GM12878 (cell line): ENCODE measurements at regions of chr3 and their contacts with region 1.

Region 1: DNA sequence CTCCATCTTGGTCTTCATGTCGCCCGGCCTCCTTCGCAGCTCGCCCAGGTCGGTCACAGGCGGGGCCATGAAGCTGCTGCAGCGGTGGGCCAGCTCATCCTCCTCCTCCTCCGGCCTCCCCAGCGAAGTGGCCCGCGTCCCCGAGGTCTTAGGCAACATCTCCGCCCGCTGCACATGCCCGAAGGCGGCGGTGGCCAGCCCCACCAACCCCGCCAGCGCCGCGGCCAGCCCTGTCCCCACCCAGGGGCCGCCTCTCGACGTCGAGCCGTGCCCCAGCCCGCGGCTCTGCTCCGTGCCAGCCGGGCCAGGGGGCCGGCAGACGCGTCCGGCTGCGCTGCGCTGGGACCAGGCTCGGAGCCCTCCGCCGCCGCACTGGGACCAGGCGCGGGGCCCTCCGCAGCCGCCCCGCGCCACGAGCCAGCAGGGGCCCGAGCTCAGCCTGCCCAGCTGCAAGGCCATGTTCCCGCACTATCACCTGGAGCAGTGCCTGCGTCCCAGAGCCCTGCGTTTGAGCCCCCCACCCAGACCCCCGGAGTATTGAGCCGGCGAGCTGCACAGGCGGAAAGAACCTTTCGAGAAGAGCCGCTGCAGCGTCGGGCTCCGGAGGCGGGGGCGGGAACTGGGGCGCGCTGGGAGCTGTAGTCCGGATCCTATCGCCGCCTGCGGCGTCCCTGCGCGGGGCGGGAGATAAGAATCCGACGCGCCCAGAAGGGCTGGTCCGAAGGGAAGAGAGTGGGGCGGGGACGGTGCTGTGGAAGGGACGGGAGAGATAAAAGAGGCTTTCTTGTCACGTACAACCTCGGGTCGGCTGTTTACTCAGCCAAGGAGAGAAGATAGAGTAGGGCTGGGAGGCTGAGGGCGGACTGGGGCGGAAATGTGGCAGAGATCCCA is at the start of gene CPOX:
- DNase-seq: peak; percentile 76
- ATAC-seq: peak; percentile 96
- H3K4me3 ChIP-seq: peak within 1 kb of the TSS; percentile 81
- H3K27ac ChIP-seq: peak within 1 kb of the TSS; percentile 84
- H3K4me1 ChIP-seq: peaks cover 7% of the 10 kb centered on the region
- H3K27me3 ChIP-seq: no peaks in the 10 kb centered on the region
- CTCF ChIP-seq: no peak
- EP300 ChIP-seq: no peak
- POLR2A ChIP-seq: peak; percentile 76
- RAD21 ChIP-seq: 0 out of 2 replicates have a peak, but pooled peaks have one; percentile 1
- polyA plus RNA-seq, gene CPOX: 40.7 to 45.8 TPM

Region 2: DNA sequence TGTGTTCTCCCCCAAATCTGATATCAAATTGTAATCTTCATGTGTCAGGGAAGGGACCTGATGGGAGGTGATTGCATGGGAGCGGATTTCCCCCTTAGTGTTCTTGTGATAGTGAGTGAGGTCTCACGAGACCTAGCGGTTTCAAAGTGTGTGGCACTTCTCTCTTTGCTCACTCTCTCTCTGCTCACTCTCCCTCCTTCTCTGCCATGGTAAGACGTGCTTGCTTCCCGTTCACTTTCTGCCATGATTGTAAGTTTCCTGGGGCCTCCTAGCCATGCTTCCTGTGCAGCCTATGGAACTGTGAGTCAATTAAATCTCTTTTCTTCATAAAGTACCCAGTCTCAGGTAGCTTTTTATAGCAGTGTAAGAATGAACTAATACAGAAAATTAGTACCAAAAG is 359.8 kb before region 1 on chr3:
- CTCF ChIA-PET with region 1: no interaction called
- POLR2A ChIA-PET with region 1: no interaction called
- RAD21 ChIA-PET with region 1: no interaction called
- SMC1A ChIA-PET with region 1: interaction called, 4 read pairs
- in situ Hi-C with region 1: no loop called
- intact Hi-C with region 1: loop called (anchors 10 kb)
- DNase-seq: peak; percentile 72
- ATAC-seq: peak; percentile 86
- H3K4me3 ChIP-seq: no peak overlapping the region
- H3K27ac ChIP-seq: no peak overlapping the region
- H3K4me1 ChIP-seq: no peaks in the 10 kb centered on the region
- H3K27me3 ChIP-seq: no peaks in the 10 kb centered on the region
- CTCF ChIP-seq: no peak
- EP300 ChIP-seq: no peak
- POLR2A ChIP-seq: no peak
- RAD21 ChIP-seq: no peak

Region 3: DNA sequence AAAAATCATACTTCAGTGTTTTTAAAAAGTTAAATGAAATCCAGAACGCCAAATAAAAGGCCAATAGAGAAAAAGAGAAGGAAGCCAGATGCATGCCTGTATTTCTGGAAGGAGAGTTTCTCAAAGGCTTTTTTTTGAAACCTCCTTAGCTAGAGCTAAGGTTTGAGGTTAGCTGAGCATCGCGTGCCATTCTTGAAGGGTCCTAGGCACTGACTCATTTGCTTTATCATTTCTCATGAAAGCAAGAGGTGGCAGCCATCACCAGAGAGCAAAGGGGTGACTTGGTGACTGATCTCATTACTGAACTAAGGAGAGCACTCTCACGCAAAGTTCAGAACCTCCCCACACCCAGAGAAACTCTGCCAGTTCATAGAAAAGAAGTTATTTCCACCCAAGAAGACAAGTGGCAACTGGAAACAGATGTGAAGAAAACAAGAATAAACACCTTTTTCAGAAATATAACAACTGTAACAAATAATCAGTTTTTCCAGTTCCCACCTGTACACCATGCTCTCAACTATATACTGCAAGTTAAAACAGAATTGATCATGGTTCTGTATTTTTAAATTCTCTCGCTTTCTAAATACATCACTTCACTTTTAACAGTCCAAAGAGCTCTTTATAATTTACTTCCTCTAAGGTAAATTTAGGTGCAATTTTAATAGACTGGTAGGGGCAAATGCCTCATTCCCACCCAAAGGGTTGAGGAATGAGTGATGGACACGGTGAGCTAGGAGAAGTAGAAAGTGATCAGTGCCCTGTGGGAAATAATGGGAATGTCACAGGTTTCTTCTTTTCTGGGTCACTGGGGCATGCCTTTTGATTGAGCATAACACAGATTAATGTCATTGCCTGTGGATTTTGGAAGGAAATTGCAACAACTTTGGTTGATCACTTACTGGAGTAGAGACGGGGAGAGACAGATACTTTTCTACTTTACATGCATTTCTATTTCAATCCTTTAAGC is 36.8 kb before region 1 on chr3:
- CTCF ChIA-PET with region 1: interaction called, 5 read pairs
- POLR2A ChIA-PET with region 1: interaction called, 4 read pairs
- RAD21 ChIA-PET with region 1: interaction called, 4 read pairs
- SMC1A ChIA-PET with region 1: interaction called, 13 read pairs
- in situ Hi-C with region 1: no loop called
- intact Hi-C with region 1: loop called (anchors 2 kb)
- DNase-seq: peak; percentile 99
- ATAC-seq: peak; percentile 55
- H3K4me3 ChIP-seq: peak overlapping the region; percentile 58
- H3K27ac ChIP-seq: peak overlapping the region; percentile 100
- H3K4me1 ChIP-seq: peaks cover 20% of the 10 kb centered on the region
- H3K27me3 ChIP-seq: no peaks in the 10 kb centered on the region
- CTCF ChIP-seq: no peak
- EP300 ChIP-seq: peak; percentile 100
- POLR2A ChIP-seq: peak; percentile 49; the same call in 1 of the 2 replicates
- RAD21 ChIP-seq: peak; percentile 35; the same call in 1 of the 2 replicates

Region 4: DNA sequence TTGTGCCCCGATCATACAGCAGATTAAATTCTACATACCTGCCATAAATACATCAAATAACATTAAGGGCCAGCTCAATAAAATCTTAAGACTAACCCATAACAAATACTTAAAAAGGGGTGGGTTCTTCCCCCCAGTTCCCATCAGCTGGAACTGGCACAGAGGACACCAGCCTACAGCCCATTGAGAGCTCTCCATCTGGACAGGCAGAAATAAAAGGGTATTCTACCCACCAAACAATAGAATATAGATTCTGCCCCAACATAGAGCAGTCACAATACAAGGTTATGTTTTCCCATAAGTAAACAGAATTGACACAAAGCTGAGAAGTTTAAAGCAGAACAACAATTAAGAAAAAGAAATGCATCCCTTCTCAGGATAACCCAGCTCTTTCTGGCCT is 11.8 kb before region 1 on chr3:
- CTCF ChIA-PET with region 1: interaction called, 14 read pairs
- POLR2A ChIA-PET with region 1: interaction called, 3 read pairs
- RAD21 ChIA-PET with region 1: interaction called, 5 read pairs
- SMC1A ChIA-PET with region 1: interaction called, 8 read pairs
- in situ Hi-C with region 1: no loop called
- intact Hi-C with region 1: no loop called
- DNase-seq: no peak
- ATAC-seq: no peak
- H3K4me3 ChIP-seq: no peak overlapping the region
- H3K27ac ChIP-seq: no peak overlapping the region
- H3K4me1 ChIP-seq: no peaks in the 10 kb centered on the region
- H3K27me3 ChIP-seq: no peaks in the 10 kb centered on the region
- CTCF ChIP-seq: no peak
- EP300 ChIP-seq: no peak
- POLR2A ChIP-seq: no peak
- RAD21 ChIP-seq: no peak

Region 5: DNA sequence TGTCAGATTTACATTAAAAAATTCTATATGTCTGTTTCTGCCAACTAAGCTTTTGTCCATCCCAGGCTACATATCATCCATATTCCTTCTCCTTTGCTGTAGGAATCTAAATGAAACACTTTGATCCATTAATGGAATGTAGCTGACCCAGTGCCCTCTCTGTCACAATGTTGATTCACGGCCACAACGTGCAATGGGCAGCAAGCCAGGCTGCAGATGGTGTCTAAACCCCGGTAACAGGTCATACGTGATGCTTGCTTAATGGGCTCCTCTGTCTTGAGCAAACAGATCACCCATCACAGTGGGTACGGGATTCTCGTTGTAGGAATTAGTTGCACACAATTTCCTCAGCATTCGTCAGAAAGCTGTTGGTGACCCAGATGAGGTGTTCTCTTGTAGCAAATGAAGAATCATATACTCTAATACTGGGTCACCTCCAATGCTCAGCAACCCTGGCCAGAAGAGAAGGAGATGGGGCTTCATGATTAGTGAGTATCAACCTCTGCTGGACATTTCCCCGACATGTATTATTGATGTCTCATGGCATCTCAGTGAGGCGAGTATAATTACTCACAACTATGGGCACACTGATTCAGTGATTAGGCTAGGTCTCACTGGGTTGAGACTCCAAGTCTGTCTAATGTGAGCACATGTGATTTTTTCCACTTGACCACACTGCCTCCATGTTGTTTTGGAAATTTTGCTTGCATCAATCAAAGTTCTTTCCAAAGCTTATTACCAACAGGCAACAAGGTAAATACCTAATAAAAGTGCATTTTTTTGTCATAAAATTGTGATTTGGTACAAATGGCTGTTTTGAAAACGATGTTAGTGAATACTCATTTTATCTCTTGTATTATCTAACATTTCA is 321.2 kb after region 1 on chr3:
- CTCF ChIA-PET with region 1: no interaction called
- POLR2A ChIA-PET with region 1: no interaction called
- RAD21 ChIA-PET with region 1: no interaction called
- SMC1A ChIA-PET with region 1: no interaction called
- in situ Hi-C with region 1: no loop called
- intact Hi-C with region 1: no loop called
- DNase-seq: no peak
- ATAC-seq: no peak
- H3K4me3 ChIP-seq: no peak overlapping the region
- H3K27ac ChIP-seq: no peak overlapping the region
- H3K4me1 ChIP-seq: no peaks in the 10 kb centered on the region
- H3K27me3 ChIP-seq: no peaks in the 10 kb centered on the region
- CTCF ChIP-seq: no peak
- EP300 ChIP-seq: no peak
- POLR2A ChIP-seq: no peak
- RAD21 ChIP-seq: no peak

Region 6: DNA sequence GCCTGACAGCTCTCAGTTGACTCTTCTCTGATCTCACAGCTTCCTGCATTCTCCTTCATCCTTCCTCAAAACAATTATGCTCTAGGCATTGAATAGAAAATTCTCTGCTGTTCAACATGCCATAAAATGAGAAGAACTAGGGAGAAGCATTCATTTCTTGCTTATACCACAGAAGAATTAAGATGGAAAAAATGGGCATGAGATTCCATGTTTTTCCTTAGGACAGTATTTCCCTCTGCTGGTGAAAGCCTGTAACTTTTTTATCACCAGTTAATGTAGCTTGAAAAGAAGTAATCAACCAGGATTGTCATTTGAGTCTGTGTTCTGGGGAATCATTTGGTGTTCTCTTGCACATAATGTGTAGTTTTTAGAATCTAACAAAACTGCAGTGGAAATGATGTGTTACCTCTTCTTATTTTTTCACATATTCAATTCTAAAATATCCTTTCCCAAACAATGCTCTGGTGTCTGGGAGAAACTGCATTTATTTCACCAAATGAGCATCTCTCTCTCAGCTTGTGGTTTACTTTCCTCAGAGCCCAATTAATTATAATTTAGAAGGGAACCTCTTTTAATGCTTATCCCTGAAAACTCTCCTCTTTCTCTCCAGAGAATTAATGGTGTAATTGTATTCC is 401.0 kb after region 1 on chr3:
- CTCF ChIA-PET with region 1: no interaction called
- POLR2A ChIA-PET with region 1: no interaction called
- RAD21 ChIA-PET with region 1: no interaction called
- SMC1A ChIA-PET with region 1: interaction called, 3 read pairs
- in situ Hi-C with region 1: loop called (anchors 5 kb)
- intact Hi-C with region 1: no loop called
- DNase-seq: no peak
- ATAC-seq: no peak
- H3K4me3 ChIP-seq: no peak overlapping the region
- H3K27ac ChIP-seq: no peak overlapping the region
- H3K4me1 ChIP-seq: no peaks in the 10 kb centered on the region
- H3K27me3 ChIP-seq: no peaks in the 10 kb centered on the region; a peak in 1 of 4 replicates
- CTCF ChIP-seq: peak; percentile 36 to 54 (median 47); a peak in 5 of 6 replicates
- EP300 ChIP-seq: no peak
- POLR2A ChIP-seq: no peak
- RAD21 ChIP-seq: peak; percentile 60